Activated T-helper 2 cell treated with anti-CD3 and anti-CD28 coated beads, Interferon-gamma antibody, Interleukin-2, Interleukin-4, amounts not matched to agents 10 μg/mL and 5 μg/mL and 100 μg/mL, durations not matched to agents 14 hours and 24 hours and 36 hours (primary cell): ENCODE measurements at regions of chr2 and their contacts with region 1.

Region 1: DNA sequence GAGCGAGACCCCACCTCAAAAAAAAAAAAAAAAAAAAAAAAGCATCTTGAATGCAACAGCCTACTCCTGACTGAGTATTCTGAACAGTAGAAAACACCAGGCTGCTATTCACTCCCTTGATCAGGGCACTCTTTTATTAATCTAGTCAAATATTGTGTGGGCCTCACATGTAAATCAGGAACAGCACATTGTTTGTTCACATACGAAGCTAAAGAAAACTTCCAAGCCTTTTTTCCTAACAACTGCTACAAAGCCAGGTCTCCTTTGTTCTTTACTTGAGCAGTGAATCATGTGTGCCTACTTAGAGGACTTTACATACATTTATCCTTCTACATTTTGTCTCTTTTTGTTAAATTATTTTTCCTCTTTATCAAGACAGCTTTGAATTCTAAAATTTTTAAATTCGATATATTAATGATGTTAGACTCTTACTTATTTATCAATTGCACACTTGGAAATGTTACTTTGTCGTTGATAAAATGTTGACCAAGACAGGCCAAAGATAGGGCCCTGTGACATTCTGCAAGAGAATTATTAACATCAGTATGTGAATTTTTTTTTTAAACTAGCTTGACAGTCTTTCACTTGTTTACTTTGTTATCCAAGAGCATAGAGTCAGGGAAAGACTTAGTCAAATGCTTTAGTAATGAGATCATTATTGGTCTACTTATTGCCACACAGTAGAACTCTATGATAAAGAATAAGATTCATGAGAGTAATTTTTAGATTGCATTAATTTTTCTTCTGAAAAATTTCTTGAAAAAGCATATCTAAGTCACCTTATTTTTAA is 13.2 kb downstream of the SPATS2L start:
- DNase-seq: no peak
- H3K4me3 Mint-ChIP-seq: no peak overlapping the region
- H3K27ac Mint-ChIP-seq: no peak overlapping the region
- H3K4me1 Mint-ChIP-seq: peaks cover 73% of the 10 kb centered on the region
- H3K27me3 Mint-ChIP-seq: no peaks in the 10 kb centered on the region

Region 2: DNA sequence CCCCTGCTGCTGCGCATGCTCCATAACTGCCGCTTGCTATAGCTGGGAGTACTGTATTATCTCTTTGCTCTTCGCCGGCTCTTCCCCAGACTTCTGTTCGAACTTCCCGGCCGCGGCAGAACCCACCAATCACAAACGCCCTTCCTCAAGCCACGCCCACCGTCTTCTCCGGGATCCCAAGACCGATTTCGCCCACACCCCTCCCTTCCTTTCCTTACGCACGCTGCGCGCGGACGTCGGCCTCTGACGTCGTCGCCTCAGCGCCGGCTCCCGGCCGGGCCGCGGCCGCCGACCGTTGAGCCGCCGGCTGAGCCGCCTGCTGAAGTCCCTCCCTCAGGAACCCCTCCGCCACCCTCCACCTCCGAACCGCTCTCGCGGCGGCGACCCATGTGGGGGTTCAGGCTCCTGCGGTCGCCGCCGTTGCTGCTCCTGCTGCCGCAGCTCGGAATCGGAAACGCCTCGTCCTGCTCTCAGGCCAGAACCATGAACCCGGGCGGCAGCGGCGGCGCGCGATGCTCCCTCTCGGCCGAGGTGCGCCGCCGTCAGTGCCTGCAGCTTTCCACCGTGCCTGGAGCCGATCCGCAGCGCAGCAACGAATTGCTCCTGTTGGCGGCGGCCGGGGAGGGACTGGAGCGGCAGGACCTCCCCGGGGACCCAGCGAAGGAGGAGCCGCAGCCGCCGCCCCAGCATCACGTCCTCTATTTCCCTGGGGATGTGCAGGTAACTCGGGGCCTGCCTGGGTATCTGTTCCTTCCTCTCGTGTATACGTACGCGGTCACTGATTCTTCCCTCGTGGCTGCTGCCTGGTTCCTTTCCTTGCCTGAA is 408.5 kb before region 1 on chr2 and contains the start of gene C2orf69:
- intact Hi-C with region 1: loop called (anchors 5 kb)
- DNase-seq: peak; percentile 91
- H3K4me3 Mint-ChIP-seq: peak within 1 kb of the TSS; percentile 92
- H3K27ac Mint-ChIP-seq: peak within 1 kb of the TSS; percentile 96
- H3K4me1 Mint-ChIP-seq: peaks cover 23% of the 10 kb centered on the region
- H3K27me3 Mint-ChIP-seq: peaks cover 6% of the 10 kb centered on the region
- total RNA-seq, gene C2orf69: 16.8 and 17.6 TPM in 2 replicates

Region 3: DNA sequence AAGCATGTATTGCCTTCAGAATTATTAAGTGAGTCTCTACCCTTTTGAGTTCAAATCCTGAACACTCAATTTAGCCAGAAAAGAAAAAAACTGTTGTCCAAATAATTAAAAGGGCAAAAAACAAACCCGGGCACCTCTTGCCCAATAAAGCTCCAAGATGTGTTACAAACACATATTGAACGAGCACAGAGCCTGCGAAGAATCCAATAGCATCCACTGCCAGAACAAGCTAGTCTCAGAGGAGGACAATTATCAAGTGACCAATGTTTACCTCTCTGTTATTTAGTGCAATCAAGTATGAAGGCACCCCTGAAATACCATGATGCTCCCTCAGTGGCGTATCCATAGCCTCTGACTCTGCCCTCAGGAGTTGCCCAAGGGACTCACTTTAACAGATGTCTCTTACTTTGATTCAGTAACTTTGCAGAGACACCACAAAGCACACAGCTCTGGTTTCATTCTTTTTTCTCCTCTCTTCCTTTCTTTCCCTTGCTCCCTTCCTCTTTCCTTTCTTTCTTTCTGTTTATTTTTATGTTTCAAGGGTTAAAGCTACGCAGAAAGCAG is 106.8 kb before region 1 on chr2:
- intact Hi-C with region 1: no loop called
- DNase-seq: no peak
- H3K4me3 Mint-ChIP-seq: no peak overlapping the region
- H3K27ac Mint-ChIP-seq: no peak overlapping the region
- H3K4me1 Mint-ChIP-seq: no peaks in the 10 kb centered on the region
- H3K27me3 Mint-ChIP-seq: peaks cover 41% of the 10 kb centered on the region

Region 4: DNA sequence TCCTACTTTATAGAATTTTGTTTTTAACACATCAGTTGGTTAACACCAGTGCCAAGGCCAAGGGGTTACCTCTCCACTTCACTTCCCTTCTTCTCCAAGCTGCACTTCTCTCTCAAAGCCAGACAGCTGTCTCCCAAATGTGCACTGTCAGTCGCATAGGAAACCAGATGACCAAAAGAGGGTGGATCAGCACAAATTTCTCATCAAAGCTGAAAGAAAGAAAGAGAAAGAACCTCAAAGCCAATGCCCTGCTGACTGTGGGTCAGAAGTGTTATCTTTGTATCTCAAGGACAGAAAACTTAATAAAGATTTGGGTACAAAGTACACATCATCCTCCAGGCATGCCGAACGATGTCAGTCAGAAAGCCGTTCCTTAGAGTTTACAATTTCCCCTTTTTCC is 19.0 kb after region 1 on chr2:
- intact Hi-C with region 1: loop called (anchors 1 kb)
- DNase-seq: no peak
- H3K4me3 Mint-ChIP-seq: no peak overlapping the region
- H3K27ac Mint-ChIP-seq: no peak overlapping the region
- H3K4me1 Mint-ChIP-seq: peaks cover 23% of the 10 kb centered on the region
- H3K27me3 Mint-ChIP-seq: no peaks in the 10 kb centered on the region

Region 5: GRCh38 chr2:200405599-200406298 is 86.0 kb after region 1 on chr2:
- intact Hi-C with region 1: loop called (anchors 1 kb)
- DNase-seq: no peak
- H3K4me3 Mint-ChIP-seq: no peak overlapping the region
- H3K27ac Mint-ChIP-seq: peak overlapping the region; percentile 67
- H3K4me1 Mint-ChIP-seq: peaks cover 50% of the 10 kb centered on the region
- H3K27me3 Mint-ChIP-seq: no peaks in the 10 kb centered on the region

Region 6: DNA sequence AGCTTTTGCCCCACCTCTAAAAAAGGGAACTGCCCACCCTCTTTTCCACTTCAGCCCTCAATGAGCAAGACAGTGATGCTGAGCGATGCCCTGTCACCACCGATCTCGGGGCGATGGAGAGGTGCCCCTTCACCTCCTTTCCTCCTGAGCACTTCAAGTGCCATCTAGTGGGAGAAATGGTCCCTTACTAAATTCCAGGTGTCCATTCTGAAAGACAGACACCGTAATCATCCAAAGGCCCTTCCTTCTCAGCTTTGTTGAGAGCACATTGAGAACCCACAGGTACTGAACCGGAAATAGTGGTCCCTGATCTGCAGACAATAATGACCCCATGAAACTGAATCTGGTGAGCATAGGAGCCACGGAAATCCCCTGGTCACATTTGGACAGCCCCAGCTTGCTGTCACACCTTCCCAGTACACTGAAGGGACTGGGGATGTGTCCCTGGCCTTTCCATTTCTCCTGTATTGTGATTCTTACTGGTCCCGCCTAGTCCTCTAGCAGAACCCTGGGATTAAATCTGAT is 151.6 kb after region 1 on chr2:
- intact Hi-C with region 1: loop called (anchors 2 kb)
- DNase-seq: no peak
- H3K4me3 Mint-ChIP-seq: no peak overlapping the region
- H3K27ac Mint-ChIP-seq: peak overlapping the region; percentile 75
- H3K4me1 Mint-ChIP-seq: peaks cover 32% of the 10 kb centered on the region
- H3K27me3 Mint-ChIP-seq: no peaks in the 10 kb centered on the region